Activated CD8-positive, alpha-beta T cell treated with anti-CD3 and anti-CD28 coated beads for 36 hours (primary cell): ENCODE measurements at regions of chr10 and their contacts with region 1.

Region 1: DNA sequence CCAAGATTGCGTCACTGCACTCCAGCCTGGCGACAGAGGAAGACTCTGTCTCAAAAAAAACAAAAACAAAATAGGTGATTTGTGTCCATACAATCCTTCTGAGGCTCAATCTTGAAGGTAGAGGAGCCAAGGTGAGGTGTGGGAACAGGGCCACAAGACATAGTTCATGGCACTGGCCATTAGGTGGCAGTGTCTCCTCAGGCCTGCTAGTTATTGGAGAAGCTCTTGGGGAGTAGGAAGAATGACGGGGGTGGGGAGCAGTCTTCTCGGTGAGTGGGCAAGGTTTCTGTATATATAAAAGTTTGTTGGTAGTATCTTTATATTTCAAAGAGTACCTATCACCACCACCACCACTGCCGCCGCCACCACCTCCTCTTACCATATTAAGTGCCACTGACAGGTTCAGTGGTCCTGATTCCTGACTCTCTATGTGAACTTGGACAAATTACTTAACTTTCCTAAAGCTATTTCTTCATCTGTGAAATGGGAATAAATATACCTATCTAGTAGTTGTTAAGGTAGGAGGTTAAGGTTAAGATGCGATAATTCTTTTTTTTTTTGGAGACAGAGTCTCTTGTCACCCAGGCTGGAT is 24.0 kb downstream of the CCSER2 start:
- DNase-seq: peak; percentile 82
- ATAC-seq: peak; percentile 88
- H3K4me3 Mint-ChIP-seq: no peak overlapping the region
- H3K27ac Mint-ChIP-seq: peak overlapping the region; percentile 31
- H3K4me1 Mint-ChIP-seq: peaks cover 67% of the 10 kb centered on the region
- H3K27me3 Mint-ChIP-seq: no peaks in the 10 kb centered on the region
- CTCF ChIP-seq: peak; percentile 85

Region 2: DNA sequence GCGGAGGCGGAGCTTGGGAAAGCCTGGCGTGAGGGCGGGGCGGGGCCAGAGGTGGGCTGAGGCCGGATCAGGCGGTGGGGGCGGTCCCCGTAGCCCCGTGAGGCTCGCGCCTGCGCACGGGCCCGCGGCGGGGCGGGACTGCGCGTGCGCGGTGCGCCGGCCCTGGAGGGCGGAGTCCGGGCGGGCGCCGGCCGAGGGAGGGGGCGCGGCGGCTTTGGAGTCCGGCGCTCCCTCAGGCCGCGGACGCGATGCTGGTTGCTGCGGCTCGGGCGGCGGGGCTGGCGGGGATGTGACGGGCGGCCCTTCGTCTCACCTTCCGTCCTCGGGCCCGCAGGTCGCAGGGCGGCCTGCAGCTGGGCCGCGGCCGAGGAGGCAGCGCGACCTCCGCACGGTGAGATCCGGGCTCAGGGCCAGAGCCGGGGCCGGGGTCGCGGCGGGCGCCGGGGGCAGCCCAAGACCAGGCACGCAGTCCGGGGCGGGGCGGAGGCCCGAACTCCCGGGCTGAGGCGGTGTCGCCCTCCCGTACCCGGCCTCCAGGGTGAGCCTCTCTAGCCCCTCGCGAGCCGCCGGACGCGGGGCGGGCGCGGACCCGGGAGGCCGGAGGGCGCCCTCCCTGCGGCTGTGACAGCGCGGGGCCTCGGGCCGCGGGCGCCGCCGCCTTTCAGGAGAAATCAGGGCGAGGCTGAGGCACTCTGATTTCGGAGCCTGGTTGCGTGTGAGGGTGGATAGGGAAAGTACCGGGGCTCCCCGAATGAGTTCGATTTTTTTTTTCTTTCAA is 23.7 kb before region 1 on chr10 and contains the start of gene CCSER2:
- CTCF ChIA-PET with region 1: interaction called, 15 read pairs
- POLR2A ChIA-PET with region 1: interaction called, 4 read pairs
- intact Hi-C with region 1: no loop called
- DNase-seq: peak; percentile 99
- ATAC-seq: peak; percentile 80
- H3K4me3 Mint-ChIP-seq: peak within 1 kb of the TSS; percentile 89
- H3K27ac Mint-ChIP-seq: peak within 1 kb of the TSS; percentile 94
- H3K4me1 Mint-ChIP-seq: peaks cover 20% of the 10 kb centered on the region
- H3K27me3 Mint-ChIP-seq: no peaks in the 10 kb centered on the region
- CTCF ChIP-seq: no peak
- total RNA-seq, gene CCSER2: 56.9 to 57.5 TPM

Region 3: GRCh38 chr10:84333864-84334451 is 18.4 kb before region 1 on chr10:
- CTCF ChIA-PET with region 1: interaction called, 63 read pairs
- POLR2A ChIA-PET with region 1: interaction called, 4 read pairs
- intact Hi-C with region 1: no loop called
- DNase-seq: peak; percentile 84
- ATAC-seq: peak; percentile 84
- H3K4me3 Mint-ChIP-seq: peak overlapping the region; percentile 64
- H3K27ac Mint-ChIP-seq: peak overlapping the region; percentile 93
- H3K4me1 Mint-ChIP-seq: peaks cover 22% of the 10 kb centered on the region
- H3K27me3 Mint-ChIP-seq: no peaks in the 10 kb centered on the region
- CTCF ChIP-seq: no peak

Region 4: DNA sequence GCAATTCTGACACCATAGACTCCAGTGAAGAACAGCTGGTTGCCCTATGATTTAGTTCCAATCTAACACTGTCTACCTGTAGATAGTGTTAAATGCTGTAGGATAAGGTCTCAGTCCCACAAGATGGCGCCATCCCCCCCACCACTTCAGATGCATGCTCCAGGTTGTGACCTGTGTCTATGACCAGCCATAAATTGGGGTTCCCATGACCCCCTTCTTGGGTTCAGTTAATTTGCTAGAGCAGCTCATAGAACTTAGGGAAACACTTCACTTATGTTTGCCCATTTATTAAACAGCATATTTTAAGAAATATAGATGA is 10.8 kb before region 1 on chr10:
- CTCF ChIA-PET with region 1: interaction called, 63 read pairs
- POLR2A ChIA-PET with region 1: no interaction called
- intact Hi-C with region 1: no loop called
- DNase-seq: peak; percentile 52
- ATAC-seq: no peak
- H3K4me3 Mint-ChIP-seq: no peak overlapping the region
- H3K27ac Mint-ChIP-seq: peak overlapping the region; percentile 76
- H3K4me1 Mint-ChIP-seq: peaks cover 58% of the 10 kb centered on the region
- H3K27me3 Mint-ChIP-seq: no peaks in the 10 kb centered on the region
- CTCF ChIP-seq: no peak

Region 5: DNA sequence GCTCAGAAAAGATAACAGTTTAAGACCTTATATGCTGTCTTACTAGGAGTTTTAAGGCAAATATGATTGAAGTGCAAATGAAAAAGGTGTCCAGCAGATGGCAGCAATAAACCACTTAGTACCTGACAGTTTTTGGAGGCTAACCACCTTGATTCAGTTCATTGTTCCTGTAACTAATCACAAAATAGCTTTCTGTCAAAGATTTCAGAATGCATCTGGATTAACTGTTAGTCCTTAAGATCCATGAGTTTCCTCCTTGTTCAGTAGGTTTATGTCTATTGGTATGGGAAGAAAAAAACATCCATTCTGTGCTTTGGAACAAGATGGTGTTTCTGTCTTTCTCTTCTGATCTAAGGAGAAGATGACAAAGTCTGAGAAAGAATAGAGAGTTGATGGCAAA is 22.7 kb after region 1 on chr10:
- CTCF ChIA-PET with region 1: interaction called, 14 read pairs
- POLR2A ChIA-PET with region 1: no interaction called
- intact Hi-C with region 1: no loop called
- DNase-seq: peak; percentile 61
- ATAC-seq: peak; percentile 62
- H3K4me3 Mint-ChIP-seq: no peak overlapping the region
- H3K27ac Mint-ChIP-seq: no peak overlapping the region
- H3K4me1 Mint-ChIP-seq: peaks cover 43% of the 10 kb centered on the region
- H3K27me3 Mint-ChIP-seq: no peaks in the 10 kb centered on the region
- CTCF ChIP-seq: peak; percentile 85

Region 6: GRCh38 chr10:84429926-84430520 is 77.7 kb after region 1 on chr10:
- CTCF ChIA-PET with region 1: interaction called, 20 read pairs
- POLR2A ChIA-PET with region 1: no interaction called
- intact Hi-C with region 1: no loop called
- DNase-seq: peak; percentile 84
- ATAC-seq: peak; percentile 89
- H3K4me3 Mint-ChIP-seq: no peak overlapping the region
- H3K27ac Mint-ChIP-seq: no peak overlapping the region
- H3K4me1 Mint-ChIP-seq: peaks cover 33% of the 10 kb centered on the region
- H3K27me3 Mint-ChIP-seq: no peaks in the 10 kb centered on the region
- CTCF ChIP-seq: peak; percentile 93

Region 7: GRCh38 chr10:84523526-84523925 is 171.2 kb after region 1 on chr10:
- CTCF ChIA-PET with region 1: no interaction called
- POLR2A ChIA-PET with region 1: no interaction called
- intact Hi-C with region 1: no loop called
- DNase-seq: no peak
- ATAC-seq: no peak
- H3K4me3 Mint-ChIP-seq: no peak overlapping the region
- H3K27ac Mint-ChIP-seq: no peak overlapping the region
- H3K4me1 Mint-ChIP-seq: peaks cover 3% of the 10 kb centered on the region
- H3K27me3 Mint-ChIP-seq: no peaks in the 10 kb centered on the region
- CTCF ChIP-seq: no peak